HEK293T (cell line): ENCODE measurements at regions of chr19 and their contacts with region 1.

Region 1: GRCh38 chr19:55146078-55146704 is 2.8 kb downstream of the TNNT1 start:
- DNase-seq: peak; percentile 75

Region 2: DNA sequence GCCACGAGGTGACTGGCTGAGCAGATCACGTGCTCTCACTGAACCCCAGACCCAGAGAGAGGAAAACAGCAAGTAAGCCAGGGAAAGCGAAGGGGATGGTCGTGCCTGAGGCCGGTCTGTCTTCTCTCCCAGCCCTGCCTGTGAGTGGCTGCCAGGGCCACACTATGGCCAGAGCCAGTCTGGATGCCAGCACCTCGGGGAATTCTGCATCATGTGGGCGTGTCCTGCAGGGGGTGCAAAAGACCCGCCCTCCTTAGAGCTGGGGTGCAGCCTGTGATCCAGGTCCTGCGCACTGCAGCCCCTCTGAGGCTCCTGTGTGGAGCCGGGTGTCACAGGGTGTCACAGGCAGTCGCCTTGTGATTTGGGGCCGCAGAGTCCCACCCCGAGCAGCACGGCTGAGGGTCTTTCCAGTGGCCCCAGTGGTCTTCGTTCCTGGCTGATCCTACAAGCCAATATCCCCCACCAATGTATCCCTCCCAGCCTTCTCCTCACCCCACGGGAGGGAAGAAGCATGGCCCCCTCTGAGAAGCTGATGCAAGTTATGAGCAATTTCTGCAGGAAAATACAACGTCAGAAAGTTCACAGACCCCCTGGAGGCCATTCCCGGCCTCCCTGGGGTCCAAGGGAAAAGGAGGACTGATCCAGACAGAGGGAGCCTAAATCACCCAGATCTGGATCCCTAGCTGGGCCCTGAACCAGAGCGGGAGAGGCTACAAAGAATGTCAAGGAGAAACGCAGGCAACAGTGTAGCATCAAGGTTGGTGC is 36.5 kb before region 1 on chr19:
- CTCF ChIA-PET with region 1: no interaction called
- POLR2A ChIA-PET with region 1: no interaction called
- DNase-seq: no peak

Region 3: GRCh38 chr19:55160128-55160985 is 14.2 kb after region 1 on chr19:
- CTCF ChIA-PET with region 1: interaction called, 15 read pairs
- POLR2A ChIA-PET with region 1: interaction called, 12 read pairs
- DNase-seq: peak; percentile 94

Region 4: DNA sequence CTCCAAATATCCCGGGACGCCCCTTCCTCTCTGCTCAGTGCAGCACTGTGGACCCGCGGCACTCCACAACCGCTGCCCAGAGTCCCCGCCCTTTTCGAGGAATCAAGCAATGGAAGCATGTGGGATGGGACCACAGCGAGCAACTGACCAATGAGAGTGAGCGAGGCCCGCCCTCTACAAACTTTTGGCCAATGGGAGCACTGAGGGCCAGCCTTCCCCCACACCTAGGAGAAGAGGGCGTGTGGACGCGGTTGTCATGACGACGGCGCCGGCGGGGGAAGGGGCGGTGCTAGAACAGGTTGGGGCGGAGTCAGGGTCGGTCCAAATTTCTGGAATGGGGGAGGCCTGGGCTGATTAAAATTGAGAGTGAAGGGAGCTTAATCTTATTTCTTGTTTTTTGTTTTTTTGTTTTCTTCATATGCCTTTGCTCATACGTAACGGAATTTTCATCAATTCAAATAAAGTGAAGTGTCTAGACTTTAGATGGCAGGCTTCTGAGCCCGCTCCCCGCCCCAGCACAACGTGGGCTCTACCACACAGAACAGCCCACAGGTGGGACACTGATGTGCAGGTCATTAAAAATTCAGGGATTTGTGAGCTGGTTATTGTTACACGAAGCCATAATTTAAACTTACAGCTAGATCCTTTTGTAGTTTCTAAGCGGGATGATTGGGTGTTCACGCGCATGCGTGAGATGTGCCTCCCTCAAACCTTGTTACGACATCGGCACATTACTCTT is 20.5 kb after region 1 on chr19 and contains the start of gene DNAAF3:
- CTCF ChIA-PET with region 1: interaction called, 10 read pairs
- POLR2A ChIA-PET with region 1: interaction called, 4 read pairs
- DNase-seq: peak; percentile 98

Region 5: GRCh38 chr19:55279770-55280643 is 133.8 kb after region 1 on chr19 and contains the start of gene HSPBP1:
- CTCF ChIA-PET with region 1: no interaction called
- POLR2A ChIA-PET with region 1: no interaction called
- DNase-seq: peak; percentile 97

Region 6: DNA sequence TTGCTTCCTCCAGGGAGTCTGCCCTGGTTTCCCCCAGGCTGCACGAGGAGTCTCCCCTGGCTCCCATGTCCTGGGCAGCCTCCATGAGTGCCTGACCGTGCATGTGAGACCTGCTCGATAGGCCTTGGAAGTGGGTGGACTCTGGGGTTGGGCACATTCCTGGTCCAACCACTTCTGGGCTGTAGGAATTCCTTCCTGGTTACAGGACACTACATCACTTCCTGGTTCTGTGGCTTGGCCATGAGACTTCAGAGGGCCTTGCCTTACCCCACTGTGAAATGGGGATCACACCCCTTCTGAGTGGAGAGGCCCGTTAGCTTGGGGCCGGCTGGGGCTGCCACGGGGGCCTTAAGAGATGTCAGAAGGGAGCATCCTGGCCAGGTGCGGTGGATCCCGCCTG is 326.3 kb after region 1 on chr19:
- CTCF ChIA-PET with region 1: no interaction called
- POLR2A ChIA-PET with region 1: no interaction called
- DNase-seq: no peak